HEK293 (cell line): ENCODE measurements at regions of chr7 and their contacts with region 1.

Region 1: DNA sequence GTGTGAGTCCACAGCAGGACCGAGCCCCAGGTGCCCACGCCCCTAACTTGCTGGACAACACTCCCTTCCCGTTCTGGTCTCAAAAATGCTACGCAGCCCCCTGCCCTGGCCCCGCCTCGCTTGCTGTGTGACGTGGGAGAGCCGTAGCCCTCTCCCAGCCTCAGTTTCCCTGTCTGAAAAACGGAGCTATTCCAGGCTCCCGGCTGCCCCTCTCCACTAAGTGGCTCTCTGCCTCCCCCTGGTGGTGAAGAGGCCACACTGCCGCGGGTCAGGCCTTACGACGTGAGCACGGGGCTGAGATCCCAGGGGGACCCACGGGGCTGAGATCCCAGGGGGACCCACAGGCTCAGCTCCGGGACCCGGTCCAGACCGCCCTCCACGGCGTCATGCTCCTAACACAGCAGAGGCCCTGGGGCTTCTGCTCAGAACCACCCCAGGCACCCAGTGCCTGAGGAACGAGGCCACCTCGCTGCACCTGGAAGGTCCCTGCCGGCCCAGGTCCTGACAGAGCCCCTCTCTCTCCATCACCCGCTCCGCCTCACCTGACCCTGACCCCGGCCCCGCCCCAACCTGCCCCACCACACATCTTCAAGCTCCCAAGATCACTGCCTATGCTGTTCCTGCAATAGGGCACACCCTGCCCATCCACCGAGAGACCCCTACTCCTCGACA is 26.7 kb downstream of the MICALL2 start:
- H3K4me3 ChIP-seq: no peak overlapping the region
- H3K27ac ChIP-seq: no peak overlapping the region
- H3K4me1 ChIP-seq: no peaks in the 10 kb centered on the region
- CTCF ChIP-seq: peak; percentile 81

Region 2: GRCh38 chr7:1219498-1219897 is 213.0 kb before region 1 on chr7:
- CTCF ChIA-PET with region 1: interaction called, 10 read pairs
- POLR2A ChIA-PET with region 1: no interaction called
- H3K4me3 ChIP-seq: no peak overlapping the region
- H3K27ac ChIP-seq: no peak overlapping the region
- H3K4me1 ChIP-seq: no peaks in the 10 kb centered on the region
- CTCF ChIP-seq: no peak

Region 3: DNA sequence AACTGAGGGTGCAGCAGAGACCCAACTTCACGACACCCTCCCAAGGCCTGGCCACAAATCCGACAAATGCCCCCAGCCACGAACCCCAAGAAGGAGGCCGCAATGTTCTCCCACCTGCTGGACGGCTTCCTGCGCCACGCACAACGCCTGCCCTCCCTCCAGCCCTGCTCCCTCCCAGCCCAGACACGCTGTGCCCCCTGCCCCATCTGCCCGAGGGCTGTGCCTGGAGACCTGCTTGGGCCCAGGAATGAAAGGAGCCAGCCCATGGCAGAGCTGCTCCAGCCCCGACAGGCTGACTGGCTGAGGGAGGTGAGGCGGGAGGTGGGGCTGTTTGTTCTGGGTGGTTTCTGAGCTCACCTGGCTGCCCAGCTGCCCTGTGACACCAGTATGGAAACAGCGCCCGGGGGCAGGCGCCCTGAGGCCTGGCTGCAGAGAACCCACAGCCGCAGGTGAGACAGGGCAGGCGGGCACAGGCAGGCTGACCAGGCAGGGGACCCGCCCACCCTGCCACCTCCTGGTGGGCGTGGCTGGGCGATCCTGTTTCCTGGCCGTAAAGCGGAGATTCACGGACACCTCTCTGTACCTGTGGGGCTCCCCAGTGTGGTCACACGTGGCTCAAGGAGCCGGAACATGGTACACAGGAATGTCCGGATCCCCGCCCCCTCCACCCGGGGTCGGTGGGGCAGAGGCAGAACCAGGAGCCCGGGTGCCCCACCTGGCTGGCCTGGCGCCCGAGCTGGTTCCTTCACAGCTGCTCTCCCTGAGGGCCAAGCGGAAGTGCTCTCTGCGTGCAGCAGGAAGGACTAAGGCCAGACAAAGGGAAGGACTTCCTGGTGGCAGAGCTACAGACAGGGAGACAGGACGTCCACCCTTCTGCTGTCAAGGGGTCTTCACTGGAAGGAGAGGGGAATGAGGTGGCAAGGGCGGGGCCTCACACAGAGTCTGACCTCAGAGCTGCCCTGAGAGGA is 22.7 kb after region 1 on chr7:
- CTCF ChIA-PET with region 1: interaction called, 10 read pairs
- POLR2A ChIA-PET with region 1: interaction called, 3 read pairs
- H3K4me3 ChIP-seq: no peak overlapping the region
- H3K27ac ChIP-seq: no peak overlapping the region
- H3K4me1 ChIP-seq: 0 out of 2 replicates have a peak, but pooled peaks cover 3% of the 10 kb centered on the region
- CTCF ChIP-seq: no peak